Activated naive CD4-positive, alpha-beta T cell treated with anti-CD3 and anti-CD28 coated beads for 36 hours (primary cell): ENCODE measurements at regions of chr7 and their contacts with region 1.

Region 1: GRCh38 chr7:6323967-6324701 is 51.7 kb upstream of the CYTH3 start:
- DNase-seq: no peak
- H3K4me3 Mint-ChIP-seq: no peak overlapping the region
- H3K27ac Mint-ChIP-seq: no peak overlapping the region
- H3K4me1 Mint-ChIP-seq: peaks cover 4% of the 10 kb centered on the region
- H3K27me3 Mint-ChIP-seq: peaks cover 2% of the 10 kb centered on the region

Region 2: DNA sequence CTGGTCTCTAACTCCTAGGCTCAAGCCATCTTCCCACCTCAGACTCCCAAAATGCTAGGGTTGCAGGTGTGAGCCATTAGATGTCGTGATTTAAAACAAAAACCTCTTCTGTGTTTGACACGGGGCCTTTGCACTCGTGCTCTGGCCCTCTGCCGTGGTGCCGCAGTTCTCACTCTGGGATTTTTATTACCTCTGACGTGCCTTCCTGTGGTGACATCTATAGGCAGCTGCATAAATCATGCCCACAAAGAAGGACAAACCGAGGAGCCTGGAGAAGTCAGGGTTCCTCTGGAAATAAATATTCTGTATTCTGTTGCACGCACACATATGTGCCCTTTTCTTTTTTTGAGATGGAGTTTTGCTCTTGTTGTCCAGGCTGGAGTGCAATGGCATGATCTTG is 469.4 kb before region 1 on chr7:
- CTCF ChIA-PET with region 1: interaction called, 4 read pairs
- intact Hi-C with region 1: loop called (anchors 2 kb)
- DNase-seq: no peak
- H3K4me3 Mint-ChIP-seq: no peak overlapping the region
- H3K27ac Mint-ChIP-seq: no peak overlapping the region
- H3K4me1 Mint-ChIP-seq: peaks cover 14% of the 10 kb centered on the region
- H3K27me3 Mint-ChIP-seq: no peaks in the 10 kb centered on the region

Region 3: DNA sequence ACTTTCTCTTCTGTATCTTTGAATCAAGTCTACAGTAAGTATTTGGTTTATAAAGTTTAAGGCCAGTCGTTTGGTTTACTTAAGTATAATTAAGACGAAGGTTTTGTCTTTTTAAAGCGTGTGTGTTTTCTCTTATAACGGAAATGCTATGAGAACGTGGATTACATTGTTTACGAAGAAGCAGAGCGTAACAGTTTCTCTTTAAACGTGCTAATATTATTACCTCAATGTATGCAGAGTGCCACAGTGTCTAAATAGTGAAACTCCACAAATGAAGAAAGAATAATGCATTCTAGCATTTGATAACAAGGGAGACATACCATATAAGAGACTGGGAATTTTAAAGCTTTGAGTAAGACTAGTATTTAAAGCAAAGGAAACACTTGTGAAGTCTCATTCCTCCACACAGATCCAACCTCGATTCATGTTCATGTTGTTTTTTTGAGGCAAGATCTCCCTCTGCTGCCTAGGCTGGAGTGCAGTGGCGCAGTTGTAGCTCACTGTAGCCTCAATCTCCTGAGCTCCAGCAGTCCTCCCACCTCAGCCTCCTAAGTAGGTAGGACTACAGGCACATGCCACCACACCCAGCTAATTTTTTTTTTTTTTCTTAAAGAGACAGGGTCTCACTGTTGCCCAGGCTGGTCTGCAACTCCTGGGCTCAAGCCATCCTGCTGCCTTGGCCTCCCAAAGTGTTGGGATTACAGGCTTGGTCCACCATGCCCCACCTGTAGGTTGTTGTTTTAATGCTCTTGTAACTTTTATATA is 217.8 kb before region 1 on chr7:
- CTCF ChIA-PET with region 1: interaction called, 6 read pairs
- intact Hi-C with region 1: loop called (anchors 1 kb)
- DNase-seq: peak; percentile 58
- H3K4me3 Mint-ChIP-seq: peak overlapping the region; percentile 82
- H3K27ac Mint-ChIP-seq: peak overlapping the region; percentile 82
- H3K4me1 Mint-ChIP-seq: peaks cover 33% of the 10 kb centered on the region
- H3K27me3 Mint-ChIP-seq: no peaks in the 10 kb centered on the region

Region 4: GRCh38 chr7:6160191-6160623 is 163.9 kb before region 1 on chr7:
- CTCF ChIA-PET with region 1: interaction called, 17 read pairs
- intact Hi-C with region 1: loop called (anchors 1 kb)
- DNase-seq: no peak
- H3K4me3 Mint-ChIP-seq: no peak overlapping the region
- H3K27ac Mint-ChIP-seq: no peak overlapping the region
- H3K4me1 Mint-ChIP-seq: no peaks in the 10 kb centered on the region
- H3K27me3 Mint-ChIP-seq: no peaks in the 10 kb centered on the region

Region 5: DNA sequence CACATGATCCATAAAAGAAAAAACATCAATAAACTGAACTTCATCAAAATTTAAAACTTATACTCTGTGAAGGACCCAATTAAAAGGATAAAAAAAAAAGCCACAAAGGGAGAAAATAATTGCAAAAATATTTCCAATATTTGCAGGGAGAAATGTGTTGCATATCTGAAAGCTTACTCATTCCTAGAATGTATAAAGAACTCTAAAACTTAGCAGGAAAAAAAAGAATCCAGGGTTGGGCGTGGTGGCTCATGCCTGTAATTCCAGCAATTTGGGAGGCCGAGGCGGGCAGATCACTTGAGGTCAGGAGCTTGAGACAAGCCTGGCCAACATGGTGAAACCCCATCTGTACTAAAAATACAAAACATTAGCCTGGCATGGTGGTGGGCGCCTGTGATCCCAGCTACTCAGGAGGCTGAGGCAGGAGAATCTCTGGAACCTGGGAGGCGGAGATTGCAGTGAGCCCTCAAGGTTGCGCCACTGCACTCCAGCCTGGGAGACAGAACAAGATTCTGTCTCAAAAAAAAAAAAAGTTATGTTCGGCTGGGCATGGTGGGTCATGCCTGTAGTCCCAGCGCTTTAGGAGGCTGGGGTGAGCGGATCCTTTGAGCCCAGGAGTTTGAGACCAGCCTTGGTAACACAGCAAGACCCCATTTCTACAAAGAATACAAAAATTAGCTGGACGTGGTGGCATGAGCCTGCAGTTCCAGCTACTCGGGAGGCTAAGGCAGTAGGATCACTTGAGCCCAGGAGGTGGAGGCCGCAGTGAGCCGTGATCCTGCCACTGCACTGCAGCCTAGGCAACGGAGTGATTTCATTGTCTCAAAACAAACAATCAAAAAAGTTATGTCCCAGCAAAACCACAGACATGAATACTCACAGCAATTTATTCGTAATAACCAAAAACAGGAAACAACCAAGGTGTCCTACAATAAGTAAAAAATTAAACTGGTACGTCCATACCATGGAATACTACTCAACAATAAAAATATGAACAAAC is 40.4 kb before region 1 on chr7:
- CTCF ChIA-PET with region 1: no interaction called
- intact Hi-C with region 1: no loop called
- DNase-seq: no peak
- H3K4me3 Mint-ChIP-seq: no peak overlapping the region
- H3K27ac Mint-ChIP-seq: no peak overlapping the region
- H3K4me1 Mint-ChIP-seq: no peaks in the 10 kb centered on the region
- H3K27me3 Mint-ChIP-seq: no peaks in the 10 kb centered on the region

Region 6: DNA sequence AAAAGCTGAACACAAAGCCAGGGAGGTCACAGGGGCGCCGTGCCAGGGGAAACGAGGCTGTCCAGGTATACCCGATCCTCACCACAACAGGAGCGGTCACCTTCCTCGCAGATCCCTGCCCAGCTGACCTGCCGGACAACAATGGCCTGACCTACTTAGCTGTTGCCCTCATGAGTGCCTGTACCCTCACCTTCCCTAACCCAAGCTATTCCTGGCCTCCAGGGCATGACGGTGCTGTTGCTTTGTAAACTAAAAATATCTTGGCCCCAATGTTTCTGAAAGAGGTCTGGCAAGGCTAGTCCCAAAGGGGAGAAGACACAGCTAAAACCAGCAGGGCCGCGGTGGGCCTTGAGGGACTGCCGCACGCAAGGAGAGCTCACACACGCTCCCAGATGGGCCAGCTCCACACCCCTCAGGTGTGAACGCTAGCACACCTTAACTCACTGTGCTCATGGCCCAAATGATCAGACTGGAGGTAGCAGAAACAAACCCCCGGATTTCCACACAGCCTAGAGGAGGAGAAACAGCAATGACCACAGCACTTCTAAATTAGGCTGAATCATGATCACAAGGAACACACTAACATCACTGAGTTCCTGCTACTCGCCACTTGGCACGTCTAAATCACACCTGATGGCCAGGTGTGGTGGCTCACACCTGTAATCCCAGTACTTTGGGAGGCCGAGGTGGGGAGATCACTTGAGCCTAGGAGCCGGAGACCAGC is 14.6 kb after region 1 on chr7:
- CTCF ChIA-PET with region 1: interaction called, 11 read pairs
- intact Hi-C with region 1: no loop called
- DNase-seq: no peak
- H3K4me3 Mint-ChIP-seq: no peak overlapping the region
- H3K27ac Mint-ChIP-seq: no peak overlapping the region
- H3K4me1 Mint-ChIP-seq: peaks cover 18% of the 10 kb centered on the region
- H3K27me3 Mint-ChIP-seq: no peaks in the 10 kb centered on the region

Region 7: GRCh38 chr7:6934986-6935385 is 610.9 kb after region 1 on chr7:
- CTCF ChIA-PET with region 1: no interaction called
- intact Hi-C with region 1: loop called (anchors 10 kb)
- DNase-seq: no peak
- H3K4me3 Mint-ChIP-seq: no peak overlapping the region
- H3K27ac Mint-ChIP-seq: no peak overlapping the region
- H3K4me1 Mint-ChIP-seq: peaks cover 3% of the 10 kb centered on the region
- H3K27me3 Mint-ChIP-seq: no peaks in the 10 kb centered on the region